CD8-positive, alpha-beta T cell (primary cell): ENCODE measurements at regions of chr10 and their contacts with region 1.

Region 1: GRCh38 chr10:97072851-97073665 is 112.7 kb downstream of the SLIT1 start:
- DNase-seq: peak; percentile 63 to 89 (median 79)
- ATAC-seq: peak; percentile 72
- H3K4me3 ChIP-seq: no peak overlapping the region
- H3K4me3 Mint-ChIP-seq: no peak overlapping the region
- H3K27ac ChIP-seq: no peak overlapping the region
- H3K27ac Mint-ChIP-seq: no peak overlapping the region
- H3K4me1 ChIP-seq: no peaks in the 10 kb centered on the region
- H3K4me1 Mint-ChIP-seq: peaks cover 5% of the 10 kb centered on the region
- H3K27me3 ChIP-seq: peaks cover 0 to 2% of the 10 kb centered on the region in 2 experiments
- H3K27me3 Mint-ChIP-seq: peaks cover 34% of the 10 kb centered on the region
- CTCF ChIP-seq: peak; percentile 82

Region 2: DNA sequence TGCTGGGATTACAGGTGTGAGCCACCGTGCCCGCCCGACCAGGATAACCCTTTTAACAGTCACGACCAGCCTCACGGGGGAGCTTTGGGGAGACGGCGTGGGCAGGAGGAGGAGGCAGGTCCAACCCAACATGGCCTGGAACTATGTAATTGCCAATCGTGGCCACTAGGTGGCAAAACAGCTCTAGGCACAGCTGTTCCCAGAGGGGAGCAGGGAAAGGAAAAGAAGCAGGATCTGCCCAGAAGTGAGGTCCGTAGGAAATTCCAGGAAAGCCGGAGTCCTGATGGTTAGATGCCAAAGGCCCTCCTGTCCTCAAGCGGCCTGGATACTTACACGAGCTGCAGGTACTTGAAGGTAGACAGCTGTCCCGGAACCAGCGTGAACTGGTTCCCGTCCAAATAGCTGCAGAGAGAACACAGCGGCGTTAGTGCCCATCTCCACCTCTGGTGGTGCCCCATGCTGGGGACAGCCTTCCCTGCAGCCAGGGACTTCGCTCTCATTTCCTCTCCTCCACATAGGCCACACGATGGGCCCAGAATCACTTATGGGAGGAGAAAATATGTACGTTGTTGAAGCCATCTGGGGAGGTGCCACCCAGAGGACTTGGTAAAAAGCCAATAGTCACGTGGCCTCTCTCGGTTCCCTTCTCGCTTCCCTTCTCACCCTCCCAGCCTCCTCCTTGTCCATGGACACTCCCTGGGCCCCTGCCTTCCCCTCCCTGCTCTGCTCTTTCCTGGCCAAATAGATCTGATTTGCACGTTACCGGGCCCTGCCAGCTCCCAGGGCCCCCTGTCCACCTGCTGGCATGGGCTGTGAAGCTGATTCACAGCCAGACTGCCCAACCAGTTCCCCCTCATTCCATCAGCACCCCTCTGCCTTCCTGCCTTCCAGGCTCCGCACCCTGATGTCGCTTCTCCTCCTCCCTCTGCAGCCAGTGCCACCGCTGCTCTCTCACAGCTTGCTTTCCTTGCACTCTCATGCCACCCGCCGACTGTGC is 35.4 kb before region 1 on chr10:
- CTCF ChIA-PET with region 1: interaction called, 12 read pairs
- POLR2A ChIA-PET with region 1: no interaction called
- intact Hi-C with region 1: no loop called
- DNase-seq: peak; percentile 35 to 81 (median 67)
- ATAC-seq: peak; percentile 92
- H3K4me3 ChIP-seq: peak overlapping the region; percentile 35 to 44
- H3K4me3 Mint-ChIP-seq: peak overlapping the region; percentile 73
- H3K27ac ChIP-seq: no peak overlapping the region
- H3K27ac Mint-ChIP-seq: no peak overlapping the region
- H3K4me1 ChIP-seq: no peaks in the 10 kb centered on the region
- H3K4me1 Mint-ChIP-seq: peaks cover 8% of the 10 kb centered on the region
- H3K27me3 ChIP-seq: no peaks in the 10 kb centered on the region
- H3K27me3 Mint-ChIP-seq: no peaks in the 10 kb centered on the region
- CTCF ChIP-seq: peak; percentile 92

Region 3: DNA sequence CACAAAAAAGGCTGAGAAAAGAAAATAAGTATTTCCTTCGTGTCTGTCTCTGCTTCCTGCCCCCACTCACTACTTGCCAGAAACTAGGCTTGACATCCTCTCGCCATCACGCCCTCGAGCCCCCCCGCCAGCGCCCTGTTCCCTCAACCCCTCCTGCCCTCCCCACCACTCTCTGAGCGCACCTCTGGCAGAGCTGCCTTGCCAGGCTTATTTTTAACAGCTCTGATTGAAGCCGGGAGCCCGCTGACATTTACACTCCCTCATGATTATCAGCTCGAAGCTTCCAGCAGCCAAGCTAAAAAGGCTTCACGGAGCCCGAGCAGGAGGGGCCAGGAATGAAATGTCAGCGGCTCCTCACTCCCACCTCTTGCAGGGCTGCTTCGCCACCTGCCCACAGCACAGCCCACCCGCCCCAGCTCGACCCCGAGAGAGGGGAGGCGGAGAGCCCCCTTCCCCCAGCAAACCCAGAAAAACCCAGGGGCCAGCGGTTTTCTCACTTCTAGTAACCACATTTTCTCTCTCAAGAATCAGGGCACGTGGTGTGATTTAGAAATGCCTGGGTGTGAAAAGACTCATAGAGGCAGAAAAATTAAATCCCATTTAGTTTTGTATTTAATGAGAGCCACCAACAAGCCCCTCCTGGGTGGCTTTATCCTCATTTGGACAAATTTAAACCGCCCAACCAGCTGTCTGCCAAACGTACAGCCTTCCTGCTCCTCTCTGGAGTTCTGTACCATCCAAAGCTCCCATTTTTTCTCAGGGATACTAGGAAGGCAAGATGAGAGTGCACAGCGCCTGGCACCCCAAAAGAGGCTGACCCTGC is 23.4 kb after region 1 on chr10:
- CTCF ChIA-PET with region 1: interaction called, 21 read pairs
- POLR2A ChIA-PET with region 1: no interaction called
- intact Hi-C with region 1: no loop called
- DNase-seq: peak in 7 of 9 experiments; percentile 7 to 78 (median 46)
- ATAC-seq: peak; percentile 76
- H3K4me3 ChIP-seq: peak overlapping the region in 1 of 2 experiments; percentile 10
- H3K4me3 Mint-ChIP-seq: peak overlapping the region; percentile 68
- H3K27ac ChIP-seq: peak overlapping the region in 1 of 2 experiments; percentile 37
- H3K27ac Mint-ChIP-seq: peak overlapping the region; percentile 66
- H3K4me1 ChIP-seq: peaks cover 20% of the 10 kb centered on the region
- H3K4me1 Mint-ChIP-seq: peaks cover 28% of the 10 kb centered on the region
- H3K27me3 ChIP-seq: no peaks in the 10 kb centered on the region
- H3K27me3 Mint-ChIP-seq: peaks cover 6% of the 10 kb centered on the region
- CTCF ChIP-seq: no peak

Region 4: DNA sequence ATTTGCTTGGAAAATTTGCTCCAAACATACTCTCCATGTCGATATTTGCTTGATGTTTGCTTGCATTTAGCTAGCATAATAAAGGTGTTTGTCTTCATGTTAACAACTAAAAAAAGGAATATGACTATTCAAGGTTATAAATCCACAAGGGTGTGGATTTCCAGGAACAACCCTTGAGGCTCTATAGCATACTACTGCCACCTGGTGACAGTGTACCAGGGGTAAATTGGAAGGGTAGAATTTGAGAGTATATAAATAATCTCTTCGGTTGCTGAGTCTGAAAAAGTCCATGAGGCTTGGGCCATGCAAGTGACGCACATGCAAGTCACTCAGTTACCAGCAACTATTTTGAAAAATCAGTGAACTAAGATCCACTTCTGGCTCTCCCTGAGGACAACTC is 44.3 kb after region 1 on chr10:
- CTCF ChIA-PET with region 1: interaction called, 28 read pairs
- POLR2A ChIA-PET with region 1: no interaction called
- intact Hi-C with region 1: loop called (anchors 1 to 2 kb)
- DNase-seq: peak in 2 of 9 experiments; percentile 35 to 39
- ATAC-seq: no peak
- H3K4me3 ChIP-seq: no peak overlapping the region
- H3K4me3 Mint-ChIP-seq: no peak overlapping the region
- H3K27ac ChIP-seq: no peak overlapping the region
- H3K27ac Mint-ChIP-seq: no peak overlapping the region
- H3K4me1 ChIP-seq: no peaks in the 10 kb centered on the region
- H3K4me1 Mint-ChIP-seq: no peaks in the 10 kb centered on the region
- H3K27me3 ChIP-seq: no peaks in the 10 kb centered on the region
- H3K27me3 Mint-ChIP-seq: peaks cover 6% of the 10 kb centered on the region
- CTCF ChIP-seq: no peak

Region 5: GRCh38 chr10:97138174-97138573 is 65.1 kb after region 1 on chr10:
- CTCF ChIA-PET with region 1: interaction called, 12 read pairs
- POLR2A ChIA-PET with region 1: no interaction called
- intact Hi-C with region 1: no loop called
- DNase-seq: no peak
- ATAC-seq: no peak
- H3K4me3 ChIP-seq: no peak overlapping the region
- H3K4me3 Mint-ChIP-seq: no peak overlapping the region
- H3K27ac ChIP-seq: no peak overlapping the region
- H3K27ac Mint-ChIP-seq: no peak overlapping the region
- H3K4me1 ChIP-seq: no peaks in the 10 kb centered on the region
- H3K4me1 Mint-ChIP-seq: no peaks in the 10 kb centered on the region
- H3K27me3 ChIP-seq: no peaks in the 10 kb centered on the region
- H3K27me3 Mint-ChIP-seq: peaks cover 16% of the 10 kb centered on the region
- CTCF ChIP-seq: no peak

Region 6: DNA sequence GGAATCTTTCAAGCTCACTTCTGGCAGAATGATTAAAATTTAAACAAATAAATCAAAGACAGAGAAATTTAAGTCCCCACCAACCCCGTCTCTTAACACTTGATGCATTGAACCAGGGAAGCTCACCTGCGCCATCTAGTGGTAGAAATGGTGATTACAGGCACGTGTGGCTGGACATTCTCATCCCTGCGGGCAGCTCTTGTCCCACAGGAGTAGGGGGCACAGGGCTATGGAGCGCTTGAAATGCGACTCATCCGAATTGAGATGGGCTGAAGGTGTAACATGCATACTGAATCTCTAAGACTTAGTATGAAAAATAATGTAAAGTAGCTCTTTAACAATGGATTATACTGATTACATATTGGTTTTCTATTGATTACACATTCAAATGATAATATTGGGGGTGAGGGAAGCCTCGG is 137.5 kb after region 1 on chr10:
- CTCF ChIA-PET with region 1: interaction called, 602 read pairs
- POLR2A ChIA-PET with region 1: interaction called, 5 read pairs
- intact Hi-C with region 1: loop called in 1 of 2 experiments (anchors 1 kb)
- DNase-seq: peak; percentile 47 to 82 (median 71)
- ATAC-seq: peak; percentile 52
- H3K4me3 ChIP-seq: no peak overlapping the region
- H3K4me3 Mint-ChIP-seq: no peak overlapping the region
- H3K27ac ChIP-seq: no peak overlapping the region
- H3K27ac Mint-ChIP-seq: no peak overlapping the region
- H3K4me1 ChIP-seq: no peaks in the 10 kb centered on the region
- H3K4me1 Mint-ChIP-seq: no peaks in the 10 kb centered on the region
- H3K27me3 ChIP-seq: no peaks in the 10 kb centered on the region
- H3K27me3 Mint-ChIP-seq: peaks cover 1% of the 10 kb centered on the region
- CTCF ChIP-seq: peak; percentile 98

Region 7: GRCh38 chr10:97334370-97335175 is 261.5 kb after region 1 on chr10 and contains the start of gene FRAT2:
- CTCF ChIA-PET with region 1: no interaction called
- POLR2A ChIA-PET with region 1: no interaction called
- intact Hi-C with region 1: no loop called
- DNase-seq: peak; percentile 80 to 95 (median 87)
- ATAC-seq: peak; percentile 89
- H3K4me3 ChIP-seq: peak within 1 kb of the TSS; percentile 61 to 92
- H3K4me3 Mint-ChIP-seq: peak within 1 kb of the TSS; percentile 97
- H3K27ac ChIP-seq: peak within 1 kb of the TSS; percentile 99
- H3K27ac Mint-ChIP-seq: peak within 1 kb of the TSS; percentile 96
- H3K4me1 ChIP-seq: peaks cover 34% of the 10 kb centered on the region
- H3K4me1 Mint-ChIP-seq: peaks cover 39% of the 10 kb centered on the region
- H3K27me3 ChIP-seq: no peaks in the 10 kb centered on the region
- H3K27me3 Mint-ChIP-seq: no peaks in the 10 kb centered on the region
- CTCF ChIP-seq: no peak
- total RNA-seq, gene FRAT2: 20.8 to 22.3 TPM

Region 8: DNA sequence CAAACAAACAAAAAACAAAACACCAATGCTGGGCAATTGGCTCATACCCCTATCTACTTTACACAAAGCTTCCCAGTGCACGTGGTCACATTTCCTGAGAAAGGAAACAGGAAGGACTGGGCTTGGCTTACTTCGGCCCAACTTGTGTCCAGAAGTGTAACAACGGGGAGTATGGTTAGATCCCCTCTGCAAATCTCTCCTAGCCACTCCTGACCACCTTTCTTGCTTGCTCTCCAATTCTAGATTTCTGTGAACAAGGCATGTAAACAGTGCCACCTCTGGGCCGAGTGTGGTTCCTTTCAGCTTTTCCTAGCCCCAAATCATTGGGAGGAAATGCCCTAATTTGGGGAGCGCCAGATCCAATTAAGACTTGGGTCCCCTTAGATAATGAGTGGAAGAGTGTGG is 282.5 kb after region 1 on chr10:
- CTCF ChIA-PET with region 1: no interaction called
- POLR2A ChIA-PET with region 1: no interaction called
- intact Hi-C with region 1: loop called (anchors 10 kb)
- DNase-seq: peak in 4 of 9 experiments; percentile 9 to 56 (median 30)
- ATAC-seq: peak; percentile 40
- H3K4me3 ChIP-seq: no peak overlapping the region
- H3K4me3 Mint-ChIP-seq: no peak overlapping the region
- H3K27ac ChIP-seq: no peak overlapping the region
- H3K27ac Mint-ChIP-seq: no peak overlapping the region
- H3K4me1 ChIP-seq: no peaks in the 10 kb centered on the region
- H3K4me1 Mint-ChIP-seq: no peaks in the 10 kb centered on the region
- H3K27me3 ChIP-seq: no peaks in the 10 kb centered on the region
- H3K27me3 Mint-ChIP-seq: no peaks in the 10 kb centered on the region
- CTCF ChIP-seq: peak; percentile 28

Region 9: GRCh38 chr10:97566339-97566996 is 493.4 kb after region 1 on chr10:
- CTCF ChIA-PET with region 1: no interaction called
- POLR2A ChIA-PET with region 1: no interaction called
- intact Hi-C with region 1: no loop called
- DNase-seq: no peak
- ATAC-seq: no peak
- H3K4me3 ChIP-seq: no peak overlapping the region
- H3K4me3 Mint-ChIP-seq: no peak overlapping the region
- H3K27ac ChIP-seq: no peak overlapping the region
- H3K27ac Mint-ChIP-seq: no peak overlapping the region
- H3K4me1 ChIP-seq: no peaks in the 10 kb centered on the region
- H3K4me1 Mint-ChIP-seq: no peaks in the 10 kb centered on the region
- H3K27me3 ChIP-seq: no peaks in the 10 kb centered on the region
- H3K27me3 Mint-ChIP-seq: no peaks in the 10 kb centered on the region
- CTCF ChIP-seq: no peak